AG04450 (cell line): ENCODE measurements at regions of chr9 and their contacts with region 1.

Region 1: DNA sequence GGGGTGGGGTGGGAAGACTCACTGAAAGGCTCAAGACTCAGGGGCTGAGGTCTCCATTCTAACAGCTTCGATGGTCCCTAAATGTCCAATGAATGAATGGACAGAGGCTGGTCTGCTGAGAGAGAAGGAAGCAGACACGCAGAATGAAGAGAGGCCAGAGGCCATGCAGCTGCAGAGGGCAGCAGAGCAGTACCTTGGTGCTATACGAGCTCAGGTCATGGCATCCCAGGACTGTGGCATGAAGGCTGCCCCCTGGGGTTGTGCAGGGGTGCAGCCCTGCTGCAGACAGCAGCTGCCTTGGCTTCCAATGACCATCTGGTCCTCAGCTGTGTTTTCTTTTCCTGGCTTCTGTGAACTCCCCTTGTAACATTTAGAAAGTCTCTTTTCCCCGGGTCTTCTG is 15.2 kb upstream of the CORO2A start:
- DNase-seq: no peak
- H3K4me3 ChIP-seq: no peak overlapping the region
- H3K27ac ChIP-seq: peak overlapping the region; percentile 21
- H3K27me3 ChIP-seq: no peaks in the 10 kb centered on the region
- CTCF ChIP-seq: peak; percentile 32; the same call in 1 of the 2 replicates

Region 2: DNA sequence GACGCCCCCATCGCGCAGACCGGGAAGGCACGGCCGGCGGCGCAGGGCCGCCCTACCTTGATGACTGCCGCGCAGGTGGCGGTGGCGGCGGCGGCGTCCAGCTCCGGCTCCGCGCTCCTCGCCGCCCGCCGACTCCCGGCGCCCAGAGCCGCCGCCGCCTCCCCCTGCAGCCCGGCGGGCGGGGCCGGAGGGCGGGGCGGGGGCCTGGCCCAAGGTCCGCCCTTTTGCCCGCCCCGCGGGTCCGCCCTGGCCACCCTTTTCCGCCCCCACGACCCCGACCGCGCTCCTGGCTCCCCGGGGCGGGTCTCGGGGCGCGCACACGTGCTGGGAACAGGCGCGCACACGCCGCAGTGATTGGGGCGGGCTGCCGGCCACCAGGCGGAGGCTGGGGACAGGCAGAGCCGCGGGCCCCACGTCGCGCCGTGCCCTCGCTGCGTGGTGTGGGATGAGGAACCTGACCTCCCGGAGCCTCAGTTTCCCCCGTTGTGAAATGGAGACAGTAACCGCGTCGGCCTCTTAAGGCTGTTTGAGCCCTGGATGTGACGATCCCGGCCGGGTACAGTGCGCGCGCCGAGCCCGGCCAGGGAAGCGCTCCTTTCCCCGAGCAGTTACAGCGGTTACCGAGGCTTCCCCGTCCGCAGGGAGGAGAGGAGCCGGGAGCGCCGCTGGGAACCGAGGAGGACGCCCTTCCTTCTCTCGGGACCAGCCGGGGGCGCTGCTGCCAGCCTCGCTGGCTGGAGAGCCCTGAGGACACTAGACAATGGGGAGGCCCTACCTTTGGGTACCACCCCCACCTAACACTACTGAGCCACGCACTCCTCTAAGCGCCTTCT is 14.9 kb before region 1 on chr9 and contains the start of gene CORO2A:
- CTCF ChIA-PET with region 1: interaction called, 13 read pairs
- POLR2A ChIA-PET with region 1: no interaction called
- DNase-seq: peak; percentile 7
- H3K4me3 ChIP-seq: peak within 1 kb of the TSS; percentile 74
- H3K27ac ChIP-seq: no peak within 1 kb of the TSS
- H3K27me3 ChIP-seq: peaks cover 7% of the 10 kb centered on the region
- CTCF ChIP-seq: peak; percentile 61
- polyA plus RNA-seq, gene CORO2A: 1.4 TPM in 2 replicates

Region 3: GRCh38 chr9:98255578-98256296 is 48.1 kb after region 1 on chr9 and contains the start of gene TBC1D2:
- CTCF ChIA-PET with region 1: interaction called, 12 read pairs
- POLR2A ChIA-PET with region 1: interaction called, 6 read pairs
- DNase-seq: peak; percentile 74
- H3K4me3 ChIP-seq: peak within 1 kb of the TSS; percentile 90
- H3K27ac ChIP-seq: peak within 1 kb of the TSS; percentile 90
- H3K27me3 ChIP-seq: no peaks in the 10 kb centered on the region
- CTCF ChIP-seq: 0 out of 2 replicates have a peak, but pooled peaks have one; percentile 24
- polyA plus RNA-seq, gene TBC1D2: 17.2 and 21.9 TPM in 2 replicates